ENCODE measurements at regions of chr19 and their contacts with region 1.

Region 1: DNA sequence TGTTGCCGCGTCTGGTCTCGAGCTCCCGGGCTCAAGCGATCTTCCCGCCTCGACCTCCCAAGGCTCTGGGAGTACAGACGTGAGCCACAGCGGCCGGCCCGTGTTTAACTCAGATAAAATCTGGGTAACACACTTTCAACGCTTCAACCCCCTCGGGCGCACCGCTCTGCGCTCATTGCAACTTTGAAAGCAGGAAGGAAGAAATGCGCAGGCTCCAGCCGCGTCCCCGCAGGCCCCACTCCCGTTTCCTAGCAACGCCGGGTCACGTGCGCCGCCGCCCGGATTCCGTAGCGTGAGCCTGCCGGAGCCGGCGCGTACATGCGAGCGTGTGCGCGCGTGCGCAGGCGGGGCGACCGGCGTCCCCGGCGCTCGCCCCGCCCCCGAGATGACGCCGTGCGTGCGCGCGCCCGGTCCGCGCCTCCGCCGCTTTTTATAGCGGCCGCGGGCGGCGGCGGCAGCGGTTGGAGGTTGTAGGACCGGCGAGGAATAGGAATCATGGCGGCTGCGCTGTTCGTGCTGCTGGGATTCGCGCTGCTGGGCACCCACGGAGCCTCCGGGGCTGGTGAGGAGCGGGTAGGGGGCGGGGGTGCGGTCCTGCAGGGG is at the start of gene BSG:
- DNase-seq: peak; percentile 100
- H3K4me3 ChIP-seq: peak within 1 kb of the TSS; percentile 81 to 98 (median 86)
- H3K27ac ChIP-seq: peak within 1 kb of the TSS; percentile 81 to 97 (median 90)
- H3K4me1 ChIP-seq: peaks cover 30 to 63% (median 51%) of the 10 kb centered on the region in 6 donors
- H3K27me3 ChIP-seq: no peaks in the 10 kb centered on the region
- CTCF ChIP-seq: peak in 2 of 11 experiments; percentile 40 to 44
- POLR2A ChIP-seq: peak; percentile 9 to 89 (median 54)
- total RNA-seq, gene BSG: 180 to 307 (median 274) TPM

Region 2: DNA sequence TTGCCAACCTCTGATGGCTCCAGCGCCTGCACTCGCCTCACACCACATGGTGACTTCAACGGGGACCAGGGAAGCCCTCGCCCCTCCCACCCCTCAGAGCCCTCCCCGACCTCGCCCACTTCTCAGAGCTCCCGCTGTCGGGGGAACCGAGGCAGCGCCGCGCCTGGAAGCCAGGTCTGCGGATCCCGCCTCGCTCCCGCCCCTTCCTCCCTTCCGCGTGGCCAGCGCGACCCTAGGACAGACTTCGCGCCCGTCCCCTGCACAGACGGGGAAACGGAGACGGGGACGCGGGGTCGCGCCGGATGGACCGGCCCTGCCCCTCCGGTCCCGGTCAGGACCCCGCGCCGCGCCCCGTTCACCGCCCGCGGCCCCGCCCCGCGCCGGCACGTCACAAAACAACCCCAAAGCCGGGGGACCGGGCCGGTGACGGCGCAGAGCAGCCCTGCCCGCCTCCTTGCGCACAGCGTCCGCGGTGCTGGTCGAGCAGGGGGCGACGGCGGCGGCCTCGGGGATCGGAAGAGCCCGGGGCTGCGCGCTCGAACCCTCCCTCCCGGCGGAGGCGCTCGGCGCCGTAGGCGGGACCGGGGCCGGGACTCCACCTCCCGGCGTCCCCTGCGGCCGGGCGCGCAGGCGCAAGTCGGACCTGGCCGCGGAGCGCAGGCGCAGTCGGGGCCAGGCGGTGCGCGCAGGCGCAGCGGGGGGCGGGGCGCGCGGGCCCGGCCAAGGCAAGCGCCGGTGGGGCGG is 41.1 kb before region 1 on chr19:
- intact Hi-C with region 1: loop called (anchors 5 kb)
- DNase-seq: peak; percentile 93
- H3K4me3 ChIP-seq: peak overlapping the region; percentile 78 to 99 (median 96)
- H3K27ac ChIP-seq: peak overlapping the region; percentile 92 to 99 (median 96)
- H3K4me1 ChIP-seq: peaks cover 17 to 46% (median 38%) of the 10 kb centered on the region in 6 donors
- H3K27me3 ChIP-seq: peaks cover 0 to 16% (median 0%) of the 10 kb centered on the region in 7 donors
- CTCF ChIP-seq: peak in 2 of 11 experiments; percentile 8 to 11
- POLR2A ChIP-seq: peak in 1 of 3 donors; percentile 39

Region 3: GRCh38 chr19:633068-633785 is 61.0 kb after region 1 on chr19 and contains the start of gene POLRMT:
- intact Hi-C with region 1: no loop called
- DNase-seq: peak; percentile 98
- H3K4me3 ChIP-seq: peak within 1 kb of the TSS; percentile 82 to 99 (median 96)
- H3K27ac ChIP-seq: peak within 1 kb of the TSS; percentile 41 to 85 (median 74)
- H3K4me1 ChIP-seq: peaks cover 17 to 58% (median 34%) of the 10 kb centered on the region in 6 donors
- H3K27me3 ChIP-seq: no peaks in the 10 kb centered on the region
- CTCF ChIP-seq: peak in 4 of 11 experiments; percentile 18 to 44 (median 34)
- POLR2A ChIP-seq: peak in 1 of 3 donors; percentile 20
- total RNA-seq, gene POLRMT: 28.6 to 55.6 (median 49.7) TPM

Measured in spleen (tissue), 13 donors.